ENCODE measurements at regions of chr2 and their contacts with region 1.

Region 1: DNA sequence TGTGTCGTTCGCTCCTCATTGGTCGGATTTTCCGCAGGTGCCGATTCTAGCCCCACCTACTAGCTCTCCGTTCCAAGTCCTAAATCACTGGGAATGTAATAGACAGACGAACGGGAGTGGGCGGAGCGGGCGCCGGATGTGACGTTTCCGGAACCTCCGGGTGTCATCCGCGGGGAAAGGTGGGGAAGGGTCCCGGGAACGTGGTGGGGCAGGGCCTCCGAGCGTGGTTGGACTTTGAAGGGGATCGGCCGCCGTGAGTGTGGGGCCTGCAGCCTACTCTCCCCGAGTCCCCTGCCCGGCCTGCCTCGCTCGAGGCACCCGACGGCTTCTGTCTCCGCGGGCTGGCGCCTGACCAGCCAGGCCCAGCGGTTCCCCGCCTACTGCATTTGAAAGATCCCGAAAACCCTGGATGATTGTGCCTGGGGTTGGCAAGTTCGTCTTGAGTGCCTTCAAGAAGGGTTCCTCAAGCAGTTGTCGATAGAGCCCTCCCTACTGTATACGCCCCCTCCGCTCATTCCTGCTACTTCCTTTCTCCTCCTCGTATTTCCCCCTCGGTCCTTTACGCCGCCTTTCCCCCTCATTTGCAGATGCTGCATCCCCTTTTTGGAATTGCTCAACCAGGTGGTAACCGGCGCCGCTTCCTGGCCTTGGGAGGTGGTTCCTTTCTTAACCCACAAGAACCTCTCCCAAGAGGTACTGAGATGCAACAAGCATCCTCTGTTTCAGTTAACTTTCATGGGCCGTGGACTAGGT is at the start of gene STAMBP:
- DNase-seq: peak; percentile 96
- ATAC-seq: peak; percentile 92
- H3K4me3 Mint-ChIP-seq: peak within 1 kb of the TSS; percentile 93
- H3K27ac Mint-ChIP-seq: peak within 1 kb of the TSS; percentile 95
- H3K4me1 Mint-ChIP-seq: peaks cover 46% of the 10 kb centered on the region
- H3K27me3 Mint-ChIP-seq: no peaks in the 10 kb centered on the region
- total RNA-seq, gene STAMBP: 42.8 to 58.8 TPM

Region 2: DNA sequence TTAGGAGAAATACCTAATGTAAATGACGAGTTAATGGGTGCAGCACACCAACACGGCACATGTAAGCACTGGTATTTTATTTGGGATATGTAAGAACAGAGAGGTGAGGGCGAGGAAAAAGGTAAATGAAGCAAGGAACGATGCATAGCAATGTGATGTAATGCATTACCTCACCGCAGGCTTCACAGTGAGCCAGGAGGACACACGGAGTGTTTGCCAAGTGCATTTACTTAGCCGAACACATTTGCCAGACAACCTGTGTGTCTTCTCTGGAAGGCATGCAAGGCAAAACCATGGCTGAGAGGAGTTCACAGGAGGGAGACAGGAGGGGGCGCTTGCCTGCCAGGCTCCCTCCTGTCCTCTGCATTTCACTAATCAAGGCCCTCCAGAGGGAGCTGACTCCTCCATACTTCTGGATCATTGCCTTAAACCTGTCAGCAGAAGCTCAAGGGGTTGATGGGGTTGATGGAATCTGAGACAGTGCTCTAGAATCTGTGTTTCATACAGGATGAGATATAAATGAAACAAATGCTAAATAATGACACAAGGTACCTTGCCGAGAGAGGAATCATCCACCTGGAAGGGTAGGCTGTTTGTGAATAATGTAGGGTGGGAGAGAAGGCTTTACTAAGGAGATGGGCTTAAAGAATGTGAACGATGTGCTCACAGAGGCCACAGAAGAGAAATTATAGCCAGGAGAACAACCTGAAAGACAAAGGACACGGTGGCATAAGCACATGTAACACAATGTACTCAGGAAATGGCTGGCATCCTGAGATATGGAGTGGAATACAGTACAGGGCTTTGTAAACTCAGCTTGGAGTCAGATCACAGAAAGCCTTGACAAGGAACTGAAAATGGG is 82.7 kb before region 1 on chr2:
- CTCF ChIA-PET with region 1: no interaction called
- DNase-seq: no peak
- ATAC-seq: no peak
- H3K4me3 Mint-ChIP-seq: no peak overlapping the region
- H3K27ac Mint-ChIP-seq: no peak overlapping the region
- H3K4me1 Mint-ChIP-seq: peaks cover 20% of the 10 kb centered on the region
- H3K27me3 Mint-ChIP-seq: no peaks in the 10 kb centered on the region

Region 3: DNA sequence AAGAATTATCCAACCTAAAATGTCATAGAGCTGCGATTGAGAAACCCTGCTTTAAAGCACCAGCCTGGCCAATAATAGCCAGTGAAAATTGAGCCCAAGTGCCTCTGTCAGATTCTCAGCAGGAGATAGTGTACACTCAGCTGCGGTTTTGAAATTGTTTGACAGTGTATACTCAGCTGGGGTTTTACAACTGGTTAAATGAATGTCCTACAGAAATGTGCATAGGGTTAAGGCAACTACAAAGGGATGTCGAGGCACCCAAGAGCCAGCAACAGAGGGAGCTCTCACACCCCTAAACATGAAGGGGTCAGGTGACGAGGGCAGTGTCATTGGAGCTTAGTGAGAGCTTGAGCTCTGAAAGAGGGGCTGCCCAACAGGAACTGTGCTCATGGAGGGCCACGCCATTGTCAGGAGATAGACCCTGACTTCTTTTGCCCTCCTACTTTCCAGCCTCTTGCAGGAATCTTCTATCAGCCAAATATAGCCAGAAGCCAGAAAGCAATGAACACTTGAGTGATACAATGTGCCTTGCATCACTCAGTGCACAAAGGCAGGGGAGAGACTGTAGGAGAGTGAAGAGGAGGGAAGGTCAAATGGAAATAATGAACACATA is 79.0 kb after region 1 on chr2:
- CTCF ChIA-PET with region 1: interaction called, 13 read pairs
- DNase-seq: peak; percentile 74
- ATAC-seq: peak; percentile 89
- H3K4me3 Mint-ChIP-seq: no peak overlapping the region
- H3K27ac Mint-ChIP-seq: no peak overlapping the region
- H3K4me1 Mint-ChIP-seq: peaks cover 9% of the 10 kb centered on the region
- H3K27me3 Mint-ChIP-seq: no peaks in the 10 kb centered on the region

Region 4: GRCh38 chr2:74002487-74003391 is 173.7 kb after region 1 on chr2:
- CTCF ChIA-PET with region 1: interaction called, 10 read pairs
- DNase-seq: peak; percentile 81
- ATAC-seq: peak; percentile 99
- H3K4me3 Mint-ChIP-seq: peak overlapping the region; percentile 72
- H3K27ac Mint-ChIP-seq: no peak overlapping the region
- H3K4me1 Mint-ChIP-seq: peaks cover 19% of the 10 kb centered on the region
- H3K27me3 Mint-ChIP-seq: peaks cover 4% of the 10 kb centered on the region

Region 5: DNA sequence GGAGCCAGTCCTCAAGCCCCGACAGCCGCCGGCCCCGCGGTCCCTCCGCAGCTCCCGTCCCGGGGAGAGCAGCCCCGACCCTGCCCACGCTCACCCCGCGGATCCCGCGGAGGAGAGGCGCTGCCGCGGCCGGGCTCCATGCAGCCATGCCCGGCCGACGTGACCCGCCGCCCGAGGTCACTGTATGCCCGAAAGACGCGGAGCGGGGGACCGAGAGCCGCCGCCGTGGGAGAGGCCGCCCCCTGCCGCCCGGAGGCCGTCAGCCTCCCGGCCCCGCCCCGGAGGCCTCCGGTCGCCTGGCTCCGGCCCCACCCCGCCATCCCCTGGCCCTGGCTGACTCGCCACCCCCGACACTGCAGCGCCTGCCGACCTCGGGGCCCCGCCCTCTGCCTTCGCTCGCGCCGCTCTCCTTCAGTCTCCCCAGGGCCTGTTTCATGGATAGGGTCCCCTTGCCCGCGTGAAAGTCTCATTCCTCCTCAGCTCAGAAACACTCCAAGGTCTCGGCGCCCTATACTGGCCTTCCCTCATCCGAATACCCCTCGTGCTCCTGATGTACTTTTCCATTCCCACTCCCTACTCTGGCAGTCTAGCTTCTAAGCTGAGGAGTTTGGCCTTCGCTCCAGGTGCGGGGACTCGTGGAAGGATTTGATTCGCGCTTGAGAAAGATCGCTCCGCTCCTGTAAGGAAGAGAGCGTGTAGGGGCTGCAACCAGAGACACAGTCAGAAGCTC is 318.9 kb after region 1 on chr2 and contains the start of gene BOLA3:
- CTCF ChIA-PET with region 1: interaction called, 134 read pairs
- DNase-seq: peak; percentile 92
- ATAC-seq: peak; percentile 98
- H3K4me3 Mint-ChIP-seq: no peak within 1 kb of the TSS
- H3K27ac Mint-ChIP-seq: no peak within 1 kb of the TSS
- H3K4me1 Mint-ChIP-seq: peaks cover 4% of the 10 kb centered on the region
- H3K27me3 Mint-ChIP-seq: no peaks in the 10 kb centered on the region
- total RNA-seq, gene BOLA3: 69.5 to 76.1 TPM

Region 6: GRCh38 chr2:74334931-74335333 is 505.9 kb after region 1 on chr2:
- CTCF ChIA-PET with region 1: interaction called, 22 read pairs
- DNase-seq: peak; percentile 81
- ATAC-seq: peak; percentile 83
- H3K4me3 Mint-ChIP-seq: no peak overlapping the region
- H3K27ac Mint-ChIP-seq: no peak overlapping the region
- H3K4me1 Mint-ChIP-seq: no peaks in the 10 kb centered on the region
- H3K27me3 Mint-ChIP-seq: no peaks in the 10 kb centered on the region

Measured in activated CD8-positive, alpha-beta memory T cell treated with anti-CD3 and anti-CD28 coated beads, Interleukin-2, amount 10 ng/mL, durations not matched to agents 7 days and 5 days (primary cell).